ENCODE measurements at regions of chr3 and their contacts with region 1.

Region 1: GRCh38 chr3:172148241-172148640 is 108.9 kb downstream of the FNDC3B start:
- DNase-seq: no peak
- ATAC-seq: no peak
- H3K4me3 ChIP-seq: no peak overlapping the region
- H3K4me3 Mint-ChIP-seq: no peak overlapping the region
- H3K27ac ChIP-seq: no peak overlapping the region
- H3K27ac Mint-ChIP-seq: no peak overlapping the region
- H3K4me1 ChIP-seq: peaks cover 6% of the 10 kb centered on the region
- H3K4me1 Mint-ChIP-seq: peaks cover 24% of the 10 kb centered on the region
- H3K27me3 ChIP-seq: no peaks in the 10 kb centered on the region
- H3K27me3 Mint-ChIP-seq: no peaks in the 10 kb centered on the region
- CTCF ChIP-seq: no peak

Region 2: DNA sequence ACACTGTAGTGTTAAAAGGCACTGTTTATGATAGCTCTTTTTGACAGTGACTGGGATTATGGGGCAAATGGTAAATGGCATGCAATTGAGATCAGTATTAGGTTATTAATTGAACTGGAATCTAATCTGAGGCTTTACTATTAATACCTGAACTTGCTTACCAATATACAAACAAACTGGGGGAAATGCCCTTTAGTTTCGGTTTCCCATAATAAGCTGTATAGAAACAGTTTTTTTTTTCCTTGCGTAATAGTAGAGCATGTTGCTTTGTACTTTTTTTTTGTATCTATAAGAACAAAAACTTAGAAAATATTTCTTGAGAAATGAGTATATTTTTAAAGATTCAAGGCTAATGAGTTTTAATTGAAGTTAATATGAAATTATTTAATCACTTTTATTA is 13.9 kb before region 1 on chr3:
- CTCF ChIA-PET with region 1: no interaction called
- POLR2A ChIA-PET with region 1: no interaction called
- intact Hi-C with region 1: loop called in 1 of 2 experiments (anchors 2 kb)
- DNase-seq: peak in 2 of 9 experiments; percentile 58 to 70
- ATAC-seq: no peak
- H3K4me3 ChIP-seq: no peak overlapping the region
- H3K4me3 Mint-ChIP-seq: no peak overlapping the region
- H3K27ac ChIP-seq: peak overlapping the region in 1 of 2 experiments; percentile 67
- H3K27ac Mint-ChIP-seq: no peak overlapping the region
- H3K4me1 ChIP-seq: peaks cover 26% of the 10 kb centered on the region
- H3K4me1 Mint-ChIP-seq: peaks cover 61% of the 10 kb centered on the region
- H3K27me3 ChIP-seq: no peaks in the 10 kb centered on the region
- H3K27me3 Mint-ChIP-seq: no peaks in the 10 kb centered on the region
- CTCF ChIP-seq: no peak

Measured in CD8-positive, alpha-beta T cell (primary cell).